ENCODE measurements at regions of chr2 and their contacts with region 1.

Region 1: DNA sequence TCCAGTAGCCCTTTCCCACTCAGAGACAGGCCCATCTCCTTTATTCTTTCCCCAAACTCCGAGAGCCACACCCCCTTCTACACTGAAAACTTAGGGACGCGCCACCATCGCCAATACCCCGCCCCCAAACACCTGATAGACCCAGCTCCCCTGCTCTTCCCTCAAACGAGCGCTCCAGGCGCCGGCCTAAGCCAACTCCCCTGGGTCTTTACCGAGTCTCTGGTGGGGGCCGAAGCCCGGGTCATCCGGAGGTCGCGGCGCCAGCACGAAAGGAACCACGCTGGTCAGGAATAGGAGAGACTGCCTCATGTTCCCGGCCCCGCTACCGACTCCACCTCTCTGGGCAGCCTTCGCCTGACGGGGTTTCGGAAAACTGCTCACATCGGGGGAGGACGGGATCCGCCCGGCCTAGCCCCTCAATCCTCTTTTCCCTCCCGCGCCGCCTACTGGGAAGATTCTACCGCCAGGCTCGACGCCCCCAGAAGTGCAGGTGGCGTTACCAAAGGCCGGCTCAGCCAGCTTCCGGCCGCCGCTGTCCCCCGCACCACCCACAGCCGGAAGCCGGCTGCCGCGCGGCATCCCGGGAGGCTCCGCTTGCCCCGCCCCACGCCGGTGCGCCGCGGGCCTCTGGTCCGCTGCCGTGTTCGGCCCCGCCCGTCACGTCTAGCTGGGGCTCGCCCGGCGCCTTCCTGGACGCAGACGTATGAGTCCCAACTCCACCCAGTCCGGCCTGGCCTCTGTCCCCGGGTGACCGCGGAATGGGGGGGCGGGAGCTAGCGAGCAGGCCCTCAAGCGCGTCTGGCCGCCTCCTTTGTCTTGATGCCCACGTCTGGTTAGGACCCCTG is at the start of gene ADAM17:
- DNase-seq: peak; percentile 78
- ATAC-seq: peak; percentile 91
- H3K4me3 ChIP-seq: peak within 1 kb of the TSS; percentile 99
- H3K27ac ChIP-seq: peak within 1 kb of the TSS; percentile 87
- H3K4me1 ChIP-seq: peaks cover 14% of the 10 kb centered on the region
- H3K27me3 ChIP-seq: no peaks in the 10 kb centered on the region
- CTCF ChIP-seq: peak; percentile 43 to 48 (median 47); a peak in 5 of 6 replicates
- EP300 ChIP-seq: peak in 1 of 2 experiments; percentile 40; a peak in 1 of 4 replicates
- POLR2A ChIP-seq: peak; percentile 96
- RAD21 ChIP-seq: peak; percentile 20; the same call in 1 of the 2 replicates
- polyA plus RNA-seq, gene ADAM17: 2.3 to 3.4 TPM

Region 2: GRCh38 chr2:9099341-9099751 is 456.2 kb before region 1 on chr2:
- CTCF ChIA-PET with region 1: no interaction called
- POLR2A ChIA-PET with region 1: no interaction called
- RAD21 ChIA-PET with region 1: no interaction called
- SMC1A ChIA-PET with region 1: no interaction called
- in situ Hi-C with region 1: no loop called
- intact Hi-C with region 1: no loop called
- DNase-seq: peak; percentile 76
- ATAC-seq: peak; percentile 82
- H3K4me3 ChIP-seq: no peak overlapping the region; the same call in 1 of the 2 replicates
- H3K27ac ChIP-seq: peak overlapping the region; percentile 69
- H3K4me1 ChIP-seq: peaks cover 30% of the 10 kb centered on the region
- H3K27me3 ChIP-seq: no peaks in the 10 kb centered on the region
- CTCF ChIP-seq: no peak
- EP300 ChIP-seq: peak; percentile 83 to 87; a peak in 3 of 4 replicates
- POLR2A ChIP-seq: 0 out of 2 replicates have a peak, but pooled peaks have one; percentile 25
- RAD21 ChIP-seq: no peak

Region 3: DNA sequence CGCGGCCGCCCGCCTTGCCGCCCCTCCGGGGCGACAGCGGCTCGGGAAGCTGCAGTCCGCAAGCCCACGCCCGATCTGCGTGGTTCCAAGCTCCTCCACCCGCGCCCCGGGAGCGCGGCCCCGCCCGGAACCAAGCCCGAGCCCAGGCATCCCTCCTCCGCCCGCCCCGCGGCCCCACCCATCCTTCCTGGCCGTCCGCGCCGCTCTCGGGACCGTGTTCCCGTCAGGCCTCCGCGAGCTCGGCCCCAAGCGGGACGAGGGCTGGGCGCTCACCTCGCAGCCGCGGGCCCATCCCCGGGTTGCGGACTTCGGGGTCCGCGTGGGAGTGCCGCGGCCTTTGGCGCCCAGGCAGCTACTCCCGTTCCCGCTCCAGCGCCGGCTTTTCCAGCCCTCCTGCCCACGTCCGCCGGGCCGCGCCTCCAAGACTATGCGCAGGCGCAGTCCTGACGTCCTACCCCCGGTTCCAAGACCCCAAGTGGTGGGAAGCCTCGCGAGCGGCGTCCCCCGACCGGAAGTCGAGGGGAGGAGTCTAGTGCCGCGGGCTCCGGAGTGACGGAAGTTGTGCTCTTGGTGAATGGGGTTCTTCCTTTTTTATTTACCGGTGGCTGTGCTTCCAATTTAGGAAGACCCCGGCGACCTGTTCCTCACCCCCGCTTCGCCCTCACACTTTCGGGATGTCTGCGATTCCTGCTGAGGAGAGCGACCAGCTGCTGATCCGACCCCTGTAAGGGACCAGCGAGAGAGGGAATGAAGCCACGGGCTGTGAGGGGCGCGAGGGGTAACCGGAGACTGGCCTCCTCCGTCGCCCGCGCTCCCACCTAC is 132.2 kb before region 1 on chr2 and contains the starts of genes CPSF3 and ITGB1BP1:
- CTCF ChIA-PET with region 1: interaction called, 3 read pairs
- POLR2A ChIA-PET with region 1: interaction called, 16 read pairs
- RAD21 ChIA-PET with region 1: interaction called, 3 read pairs
- SMC1A ChIA-PET with region 1: interaction called, 4 read pairs
- in situ Hi-C with region 1: no loop called
- intact Hi-C with region 1: loop called (anchors 5 kb)
- DNase-seq: peak; percentile 88
- ATAC-seq: peak; percentile 91
- H3K4me3 ChIP-seq: peak within 1 kb of the TSS; percentile 89
- H3K27ac ChIP-seq: peak within 1 kb of the TSS; percentile 86
- H3K4me1 ChIP-seq: peaks cover 24% of the 10 kb centered on the region
- H3K27me3 ChIP-seq: no peaks in the 10 kb centered on the region
- CTCF ChIP-seq: no peak
- EP300 ChIP-seq: no peak
- POLR2A ChIP-seq: peak; percentile 72
- RAD21 ChIP-seq: no peak
- polyA plus RNA-seq, gene CPSF3: 68.7 to 101 TPM
- polyA plus RNA-seq, gene ITGB1BP1: 58.8 to 115 TPM

Region 4: DNA sequence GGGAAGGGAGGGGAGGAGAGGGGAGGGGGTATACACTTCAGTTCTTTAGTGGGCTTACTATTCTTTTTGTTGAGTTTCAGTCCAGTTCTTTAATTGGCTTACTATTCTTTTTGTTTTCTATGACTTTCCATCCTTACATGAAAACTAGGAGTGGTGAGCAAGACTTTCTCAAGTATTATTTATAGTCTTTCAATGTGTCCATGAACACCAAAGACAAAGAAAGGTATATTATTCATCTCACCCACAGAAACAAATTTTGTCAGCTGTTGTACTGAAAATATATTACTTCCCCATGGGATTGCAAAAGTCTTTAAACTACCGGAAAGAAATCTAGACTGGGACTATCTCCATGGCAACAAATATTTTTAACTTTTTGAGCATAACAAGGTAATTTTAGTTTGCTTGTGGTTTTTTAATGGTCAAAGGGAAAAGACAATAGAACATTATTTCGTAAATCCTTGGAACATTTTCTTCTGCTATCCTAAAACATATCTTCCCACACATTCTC is 17.5 kb before region 1 on chr2:
- CTCF ChIA-PET with region 1: interaction called, 27 read pairs
- POLR2A ChIA-PET with region 1: interaction called, 64 read pairs
- RAD21 ChIA-PET with region 1: interaction called, 54 read pairs
- SMC1A ChIA-PET with region 1: interaction called, 152 read pairs
- in situ Hi-C with region 1: no loop called
- intact Hi-C with region 1: loop called (anchors 2 kb)
- DNase-seq: no peak
- ATAC-seq: peak; percentile 40
- H3K4me3 ChIP-seq: no peak overlapping the region
- H3K27ac ChIP-seq: no peak overlapping the region; the same call in 1 of the 2 replicates
- H3K4me1 ChIP-seq: peaks cover 20% of the 10 kb centered on the region
- H3K27me3 ChIP-seq: no peaks in the 10 kb centered on the region
- CTCF ChIP-seq: no peak
- EP300 ChIP-seq: peak in 1 of 2 experiments; percentile 44; a peak in 1 of 4 replicates
- POLR2A ChIP-seq: no peak
- RAD21 ChIP-seq: no peak

Region 5: DNA sequence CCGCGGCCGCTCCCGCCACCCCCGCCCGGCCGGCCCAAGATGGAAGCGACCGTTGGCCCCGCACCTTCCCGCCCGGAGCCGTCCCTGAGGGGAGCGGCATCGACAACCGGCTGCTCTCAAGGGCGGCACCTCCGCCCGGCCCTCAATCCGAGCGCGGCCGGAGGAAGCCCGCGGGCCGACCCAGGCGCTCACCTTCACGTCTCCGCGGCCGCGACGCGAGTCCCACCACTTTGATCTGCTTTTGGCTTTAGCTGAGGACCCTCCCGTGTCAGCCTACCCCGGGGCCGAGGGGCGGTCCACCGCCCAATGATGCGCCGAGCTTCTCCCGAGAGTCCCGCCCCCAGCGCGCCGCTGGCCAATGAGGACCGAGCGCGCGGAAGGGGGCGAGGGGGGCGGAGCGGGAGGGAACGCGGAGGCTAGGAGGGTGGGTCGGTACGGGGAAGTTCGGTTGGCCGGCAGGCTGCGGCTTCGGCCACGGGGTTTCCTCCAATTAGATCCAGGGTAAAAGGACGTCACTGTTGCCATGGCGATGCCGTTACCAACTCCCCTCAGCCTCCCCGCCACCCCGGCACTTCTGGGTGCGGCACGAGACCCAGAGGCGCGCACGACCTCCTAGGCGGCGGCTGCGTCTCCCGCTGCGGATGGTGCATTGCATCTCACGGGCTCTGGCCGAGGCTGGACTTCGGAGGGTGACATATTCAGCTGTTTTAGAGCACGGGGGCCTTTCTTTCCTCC is 75.4 kb after region 1 on chr2 and contains the start of gene YWHAQ:
- CTCF ChIA-PET with region 1: interaction called, 9 read pairs
- POLR2A ChIA-PET with region 1: interaction called, 23 read pairs
- RAD21 ChIA-PET with region 1: interaction called, 15 read pairs
- SMC1A ChIA-PET with region 1: interaction called, 8 read pairs
- in situ Hi-C with region 1: no loop called
- intact Hi-C with region 1: loop called (anchors 5 kb)
- DNase-seq: peak; percentile 94
- ATAC-seq: peak; percentile 94
- H3K4me3 ChIP-seq: peak within 1 kb of the TSS; percentile 80
- H3K27ac ChIP-seq: peak within 1 kb of the TSS; percentile 83
- H3K4me1 ChIP-seq: peaks cover 3% of the 10 kb centered on the region; the same call in 1 of the 2 replicates
- H3K27me3 ChIP-seq: no peaks in the 10 kb centered on the region
- CTCF ChIP-seq: no peak
- EP300 ChIP-seq: peak; percentile 4 to 78; a peak in 1 of 4 replicates
- POLR2A ChIP-seq: peak; percentile 97
- RAD21 ChIP-seq: no peak; the same call in 1 of the 2 replicates
- polyA plus RNA-seq, gene YWHAQ: 63.0 to 136 TPM

Region 6: DNA sequence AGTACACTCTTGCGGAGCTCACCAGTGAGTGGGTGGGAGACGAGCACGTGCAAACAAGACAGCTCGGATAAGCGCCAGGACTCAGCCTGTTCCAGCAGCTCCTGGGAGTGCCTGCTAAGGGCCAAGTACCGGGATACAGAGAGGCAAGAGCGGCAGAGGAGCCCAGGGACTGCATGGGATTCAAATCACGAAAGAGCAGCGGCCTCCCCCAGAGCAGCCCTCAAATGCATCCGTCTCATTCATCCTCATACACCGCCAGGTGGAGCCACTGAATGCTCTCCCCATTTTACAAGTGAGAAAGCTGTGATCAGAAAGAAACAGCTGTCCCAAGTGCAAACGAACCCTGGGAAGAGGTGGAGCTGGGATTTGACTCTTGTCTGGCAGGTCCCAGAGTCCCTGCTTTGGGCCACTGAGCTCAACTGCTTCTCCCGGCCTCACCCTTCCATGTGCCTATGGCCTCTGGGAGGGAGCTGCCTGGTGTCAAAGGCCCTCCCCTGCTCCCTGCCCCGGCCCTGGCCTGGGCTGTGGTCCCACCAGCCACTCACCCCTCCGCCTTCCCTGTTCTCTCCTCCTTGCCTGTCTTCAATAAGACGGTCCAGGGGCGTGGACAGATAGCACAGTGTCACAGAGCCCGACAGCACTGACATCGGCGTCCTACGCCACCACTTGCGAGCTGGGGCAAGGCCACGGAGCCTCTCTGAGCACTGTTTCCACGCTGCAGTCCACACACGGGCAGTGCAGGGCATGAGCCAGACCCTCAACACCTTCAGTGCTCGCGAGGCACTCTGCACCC is 215.0 kb after region 1 on chr2:
- CTCF ChIA-PET with region 1: interaction called, 8 read pairs
- POLR2A ChIA-PET with region 1: no interaction called
- RAD21 ChIA-PET with region 1: interaction called, 12 read pairs
- SMC1A ChIA-PET with region 1: interaction called, 5 read pairs
- in situ Hi-C with region 1: no loop called
- intact Hi-C with region 1: no loop called
- DNase-seq: no peak
- ATAC-seq: peak; percentile 83
- H3K4me3 ChIP-seq: no peak overlapping the region
- H3K27ac ChIP-seq: no peak overlapping the region
- H3K4me1 ChIP-seq: peaks cover 6% of the 10 kb centered on the region; the same call in 1 of the 2 replicates
- H3K27me3 ChIP-seq: no peaks in the 10 kb centered on the region; a peak in 2 of 4 replicates
- CTCF ChIP-seq: peak; percentile 61 to 74 (median 73)
- EP300 ChIP-seq: no peak
- POLR2A ChIP-seq: no peak
- RAD21 ChIP-seq: peak; percentile 58